ENCODE measurements at regions of chr19 and their contacts with region 1.

Region 1: DNA sequence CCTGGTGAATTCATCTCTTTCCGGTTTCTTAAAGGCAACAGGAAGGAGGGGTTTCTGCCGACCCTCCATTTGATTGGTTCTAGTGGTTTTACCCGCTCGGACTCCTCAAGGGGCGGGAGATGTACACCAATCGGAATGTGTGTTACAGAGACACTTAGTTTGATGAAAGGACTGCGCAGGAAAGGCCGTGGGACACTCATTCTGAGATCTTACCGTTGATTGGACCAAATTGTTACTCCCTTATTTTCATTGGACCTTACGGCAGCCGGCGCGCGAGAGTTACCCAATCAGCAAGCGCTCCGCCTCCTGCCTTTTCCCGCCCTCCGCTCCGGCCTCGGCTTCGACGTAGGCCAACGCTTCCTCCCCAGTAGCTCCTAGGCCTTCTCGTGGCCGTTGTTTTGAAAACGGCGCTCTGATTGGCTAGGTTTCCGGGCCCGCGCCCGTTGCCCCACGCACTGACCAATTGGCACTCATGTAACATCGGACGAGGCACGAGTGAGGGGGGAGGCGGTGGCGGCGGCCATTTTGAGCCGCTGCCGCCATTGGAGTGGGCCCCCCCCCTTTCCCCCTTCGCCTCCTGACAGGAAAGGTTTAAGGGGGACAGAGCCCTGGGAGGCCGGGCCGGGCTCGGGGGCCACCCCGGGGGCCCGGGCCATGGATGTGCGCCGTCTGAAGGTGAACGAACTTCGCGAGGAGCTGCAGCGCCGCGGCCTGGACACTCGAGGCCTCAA is at the start of gene HNRNPUL1:
- DNase-seq: peak; percentile 99
- H3K4me3 Mint-ChIP-seq: peak within 1 kb of the TSS; percentile 94
- H3K27ac Mint-ChIP-seq: peak within 1 kb of the TSS; percentile 99
- H3K4me1 Mint-ChIP-seq: peaks cover 52% of the 10 kb centered on the region
- H3K27me3 Mint-ChIP-seq: no peaks in the 10 kb centered on the region
- total RNA-seq, gene HNRNPUL1: 254 and 264 TPM in 2 replicates

Region 2: DNA sequence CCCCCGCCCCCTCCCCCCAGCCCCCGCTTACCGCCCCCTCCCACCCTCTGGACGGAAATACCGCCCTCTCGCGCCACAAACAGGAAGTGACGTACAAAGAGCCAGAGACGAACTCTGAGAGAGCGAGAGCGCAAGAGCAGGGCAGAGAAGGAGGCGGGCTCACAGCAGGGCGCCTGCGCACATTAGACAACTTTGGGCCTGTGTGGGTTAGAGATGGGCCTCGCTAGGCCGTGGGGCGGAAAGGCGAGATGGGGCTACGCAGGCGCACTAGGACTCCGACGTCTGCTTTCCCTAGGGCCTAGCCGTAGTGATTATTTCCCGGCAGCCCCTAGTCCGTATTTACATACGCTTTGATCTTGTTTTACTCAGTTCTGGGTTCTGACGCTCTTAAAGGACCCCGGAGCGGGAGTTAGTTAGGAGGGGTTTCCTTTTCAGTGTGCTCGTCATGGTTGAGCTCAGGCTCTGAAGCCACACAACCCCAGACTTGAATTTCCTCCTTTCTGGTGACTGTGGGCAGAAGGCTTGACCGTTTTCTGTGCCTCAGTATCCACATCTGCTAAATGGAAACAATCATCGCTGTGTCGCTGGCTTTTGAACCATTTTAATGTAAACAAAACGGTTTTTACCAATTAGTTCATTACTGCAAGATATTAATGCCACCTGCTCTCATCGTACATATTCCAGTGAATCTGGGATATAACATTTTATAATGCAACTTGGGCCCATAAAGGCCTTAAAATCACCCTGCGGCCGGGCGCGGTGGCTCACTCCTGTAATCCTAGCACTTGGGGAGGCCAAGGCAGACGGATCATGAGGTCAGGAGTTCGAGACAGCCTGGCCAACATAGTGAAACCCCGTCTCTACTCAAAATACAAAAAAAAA is 978.4 kb before region 1 on chr19:
- intact Hi-C with region 1: loop called (anchors 2 kb)
- DNase-seq: peak; percentile 98
- H3K4me3 Mint-ChIP-seq: peak overlapping the region; percentile 80
- H3K27ac Mint-ChIP-seq: peak overlapping the region; percentile 98
- H3K4me1 Mint-ChIP-seq: peaks cover 32% of the 10 kb centered on the region
- H3K27me3 Mint-ChIP-seq: no peaks in the 10 kb centered on the region

Region 3: DNA sequence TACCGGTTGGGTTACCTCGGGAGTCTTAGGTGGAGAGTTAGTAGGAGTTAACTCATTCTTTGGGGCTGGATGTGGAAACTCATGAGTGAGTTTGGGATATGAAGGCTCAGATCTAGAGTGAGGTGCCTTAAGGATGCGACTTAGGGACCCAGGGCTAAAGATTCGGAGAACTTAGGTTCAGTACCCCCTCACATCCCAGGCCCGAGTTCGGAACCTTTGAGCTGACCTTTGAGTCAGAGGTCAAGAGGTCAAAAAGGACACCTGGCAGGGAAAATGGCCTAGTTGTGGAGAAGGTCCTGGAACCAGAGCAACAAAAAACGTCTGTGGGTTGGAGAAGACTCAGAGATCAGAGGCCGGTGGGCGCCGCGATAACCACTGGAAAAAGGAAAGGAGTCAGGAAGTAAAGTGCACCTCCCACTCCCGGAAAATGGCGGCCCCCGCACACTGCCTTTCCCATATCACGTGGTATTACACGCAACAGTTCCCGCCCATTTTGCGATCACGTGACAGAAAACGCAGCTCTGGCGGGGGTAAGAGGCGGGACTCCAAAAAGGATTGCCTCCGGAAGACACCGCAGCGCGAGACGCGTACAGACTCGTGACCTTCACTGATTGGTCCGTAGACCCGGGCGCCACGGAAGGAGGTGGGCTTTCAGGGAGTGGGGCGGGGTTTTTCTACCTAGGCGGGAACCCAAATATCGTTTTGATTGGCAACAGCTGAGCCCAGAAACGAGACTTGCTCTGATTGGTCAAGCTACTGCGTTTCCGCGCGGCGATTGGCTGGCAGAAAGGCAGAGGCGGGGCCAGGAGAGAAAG is 513.7 kb before region 1 on chr19 and contains the start of gene ACTMAP:
- intact Hi-C with region 1: loop called (anchors 1 kb)
- DNase-seq: peak; percentile 100
- H3K4me3 Mint-ChIP-seq: peak within 1 kb of the TSS; percentile 99
- H3K27ac Mint-ChIP-seq: peak within 1 kb of the TSS; percentile 99
- H3K4me1 Mint-ChIP-seq: peaks cover 27% of the 10 kb centered on the region
- H3K27me3 Mint-ChIP-seq: no peaks in the 10 kb centered on the region
- total RNA-seq, gene ACTMAP: 9.5 and 10.0 TPM in 2 replicates

Region 4: GRCh38 chr19:41123716-41124294 is 140.2 kb before region 1 on chr19:
- intact Hi-C with region 1: loop called (anchors 2 kb)
- DNase-seq: no peak
- H3K4me3 Mint-ChIP-seq: no peak overlapping the region
- H3K27ac Mint-ChIP-seq: no peak overlapping the region
- H3K4me1 Mint-ChIP-seq: peaks cover 29% of the 10 kb centered on the region
- H3K27me3 Mint-ChIP-seq: peaks cover 15% of the 10 kb centered on the region

Region 5: GRCh38 chr19:41310033-41310758 is 46.2 kb after region 1 on chr19 and contains the start of gene CCDC97:
- intact Hi-C with region 1: loop called (anchors 1 kb)
- DNase-seq: peak; percentile 89
- H3K4me3 Mint-ChIP-seq: peak within 1 kb of the TSS; percentile 95
- H3K27ac Mint-ChIP-seq: peak within 1 kb of the TSS; percentile 94
- H3K4me1 Mint-ChIP-seq: peaks cover 65% of the 10 kb centered on the region
- H3K27me3 Mint-ChIP-seq: no peaks in the 10 kb centered on the region
- total RNA-seq, gene CCDC97: 35.3 and 36.1 TPM in 2 replicates

Region 6: DNA sequence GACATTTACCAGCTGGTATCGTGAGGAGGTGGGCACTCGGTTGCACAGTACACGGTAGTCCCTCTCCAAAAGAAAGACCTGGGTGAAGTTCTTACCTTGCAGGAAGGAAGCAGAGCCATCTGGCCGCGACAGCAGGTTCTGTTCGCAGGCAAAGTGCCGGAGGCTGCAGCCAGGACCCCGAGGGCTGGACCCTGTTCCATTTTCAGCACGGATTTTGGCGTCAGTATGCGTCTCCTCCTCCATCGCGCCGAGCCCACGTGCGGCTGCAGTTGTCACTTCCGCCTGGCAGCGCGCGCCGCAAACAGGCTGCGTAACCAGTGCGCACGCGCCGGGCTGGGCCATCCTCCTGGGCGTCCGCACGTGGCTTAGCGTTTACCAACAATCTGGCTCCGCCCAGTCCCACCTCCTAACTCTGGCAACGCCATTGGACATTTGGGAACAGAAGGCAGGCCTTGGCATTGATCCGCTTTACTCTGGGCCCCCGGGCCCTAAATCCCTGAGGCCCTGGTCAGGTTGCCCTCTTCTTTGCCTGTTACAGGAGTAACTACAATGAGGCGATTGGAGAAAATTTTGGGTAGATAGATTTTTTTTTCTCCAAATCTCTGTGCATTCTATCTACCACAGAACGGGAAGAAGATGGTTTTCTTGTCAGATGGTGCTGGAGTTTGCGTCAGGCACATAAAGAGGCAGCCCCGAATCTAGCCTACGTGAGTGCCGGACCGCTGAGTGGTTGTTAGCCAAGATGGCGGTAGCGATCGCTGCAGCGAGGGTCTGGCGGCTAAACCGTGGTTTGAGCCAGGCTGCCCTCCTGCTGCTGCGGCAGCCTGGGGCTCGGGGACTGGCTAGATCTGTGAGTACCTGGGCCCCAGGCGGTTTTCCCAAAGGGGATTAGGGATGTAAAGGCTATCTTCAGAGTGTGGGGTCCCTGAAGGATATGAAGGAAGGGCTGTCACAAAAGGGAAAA is 133.4 kb after region 1 on chr19 and contains the starts of genes BCKDHA and EXOSC5:
- intact Hi-C with region 1: loop called (anchors 1 kb)
- DNase-seq: peak; percentile 99
- H3K4me3 Mint-ChIP-seq: peak within 1 kb of the TSS; percentile 97
- H3K27ac Mint-ChIP-seq: peak within 1 kb of the TSS; percentile 99
- H3K4me1 Mint-ChIP-seq: peaks cover 28% of the 10 kb centered on the region
- H3K27me3 Mint-ChIP-seq: no peaks in the 10 kb centered on the region
- total RNA-seq, gene BCKDHA: 14.6 and 22.7 TPM in 2 replicates
- total RNA-seq, gene EXOSC5: 59.3 and 66.6 TPM in 2 replicates

Region 7: GRCh38 chr19:42244347-42245220 is 980.6 kb after region 1 on chr19:
- intact Hi-C with region 1: loop called (anchors 10 kb)
- DNase-seq: peak; percentile 89
- H3K4me3 Mint-ChIP-seq: peak overlapping the region; percentile 92
- H3K27ac Mint-ChIP-seq: peak overlapping the region; percentile 91
- H3K4me1 Mint-ChIP-seq: peaks cover 50% of the 10 kb centered on the region
- H3K27me3 Mint-ChIP-seq: no peaks in the 10 kb centered on the region